Heart right ventricle (tissue), 16 donors: ENCODE measurements at regions of chr9 and their contacts with region 1.

Region 1: DNA sequence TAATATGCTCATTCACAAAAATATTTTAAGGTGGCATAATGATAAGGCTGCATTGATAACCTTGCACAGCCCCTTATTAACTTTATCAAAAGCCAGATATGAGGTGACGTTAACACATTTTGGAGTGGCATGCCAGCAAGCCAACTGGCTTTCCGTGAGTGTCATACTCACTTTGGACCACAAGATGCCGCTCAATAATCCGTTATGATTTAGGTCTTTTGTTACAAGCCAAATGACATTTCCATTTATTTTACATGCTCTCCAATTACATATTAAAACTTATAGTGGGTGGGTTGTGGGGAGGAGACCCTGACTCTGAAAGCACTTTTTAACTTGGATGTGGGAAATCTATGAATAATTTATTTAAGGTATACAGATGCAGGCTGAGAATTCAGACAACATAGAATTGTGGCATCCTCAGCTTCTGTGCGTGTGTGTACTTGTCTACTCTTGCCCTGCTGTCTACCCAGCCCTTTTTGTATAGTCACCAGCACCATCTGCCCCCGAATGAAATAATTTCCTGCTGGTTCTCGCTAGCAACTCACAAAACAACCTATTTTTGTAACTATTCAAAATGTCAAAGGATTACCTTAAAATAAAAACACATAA is 305.1 kb downstream of the PSAT1 start:
- DNase-seq: peak in 1 of 2 donors; percentile 5
- ATAC-seq: no peak
- H3K4me3 ChIP-seq: no peak overlapping the region
- H3K27ac ChIP-seq: no peak overlapping the region
- H3K4me1 ChIP-seq: no peaks in the 10 kb centered on the region
- H3K27me3 ChIP-seq: peaks cover 0 to 29% (median 0%) of the 10 kb centered on the region in 7 donors
- CTCF ChIP-seq: peak; percentile 20 to 75 (median 59)

Region 2: GRCh38 chr9:78439190-78439865 is 162.7 kb before region 1 on chr9:
- intact Hi-C with region 1: no loop called
- DNase-seq: peak; percentile 66 to 75
- ATAC-seq: peak; percentile 52 to 88 (median 80)
- H3K4me3 ChIP-seq: peak overlapping the region in 2 of 10 donors; percentile 18 to 25
- H3K27ac ChIP-seq: no peak overlapping the region
- H3K4me1 ChIP-seq: peaks cover 0 to 9% (median 3%) of the 10 kb centered on the region in 9 donors
- H3K27me3 ChIP-seq: peaks cover 0 to 41% (median 7%) of the 10 kb centered on the region in 7 donors
- CTCF ChIP-seq: peak; percentile 86 to 97 (median 91)

Region 3: DNA sequence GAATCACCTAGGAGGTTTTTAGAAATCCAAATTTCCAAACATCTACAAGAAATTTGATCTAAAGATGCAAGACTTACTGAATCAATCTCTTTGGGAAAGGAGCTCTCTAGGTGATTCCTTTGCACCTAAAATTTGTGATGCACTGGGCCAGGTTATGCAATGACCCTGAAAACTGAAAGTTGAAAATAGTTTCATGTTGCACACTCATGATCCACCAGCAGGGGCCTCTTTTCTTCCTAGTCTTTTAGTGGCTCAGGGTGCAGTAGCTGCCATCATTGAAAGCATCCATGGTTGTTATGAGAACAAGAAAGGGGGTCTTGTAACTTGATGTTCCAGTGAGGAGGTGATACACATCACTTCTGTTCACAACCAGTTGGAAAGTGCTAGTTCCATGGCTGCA is 181.7 kb after region 1 on chr9:
- intact Hi-C with region 1: loop called in 1 of 10 experiments (anchors 10 kb)
- DNase-seq: no peak
- ATAC-seq: no peak
- H3K4me3 ChIP-seq: no peak overlapping the region
- H3K27ac ChIP-seq: no peak overlapping the region
- H3K4me1 ChIP-seq: no peaks in the 10 kb centered on the region
- H3K27me3 ChIP-seq: no peaks in the 10 kb centered on the region
- CTCF ChIP-seq: no peak

Region 4: DNA sequence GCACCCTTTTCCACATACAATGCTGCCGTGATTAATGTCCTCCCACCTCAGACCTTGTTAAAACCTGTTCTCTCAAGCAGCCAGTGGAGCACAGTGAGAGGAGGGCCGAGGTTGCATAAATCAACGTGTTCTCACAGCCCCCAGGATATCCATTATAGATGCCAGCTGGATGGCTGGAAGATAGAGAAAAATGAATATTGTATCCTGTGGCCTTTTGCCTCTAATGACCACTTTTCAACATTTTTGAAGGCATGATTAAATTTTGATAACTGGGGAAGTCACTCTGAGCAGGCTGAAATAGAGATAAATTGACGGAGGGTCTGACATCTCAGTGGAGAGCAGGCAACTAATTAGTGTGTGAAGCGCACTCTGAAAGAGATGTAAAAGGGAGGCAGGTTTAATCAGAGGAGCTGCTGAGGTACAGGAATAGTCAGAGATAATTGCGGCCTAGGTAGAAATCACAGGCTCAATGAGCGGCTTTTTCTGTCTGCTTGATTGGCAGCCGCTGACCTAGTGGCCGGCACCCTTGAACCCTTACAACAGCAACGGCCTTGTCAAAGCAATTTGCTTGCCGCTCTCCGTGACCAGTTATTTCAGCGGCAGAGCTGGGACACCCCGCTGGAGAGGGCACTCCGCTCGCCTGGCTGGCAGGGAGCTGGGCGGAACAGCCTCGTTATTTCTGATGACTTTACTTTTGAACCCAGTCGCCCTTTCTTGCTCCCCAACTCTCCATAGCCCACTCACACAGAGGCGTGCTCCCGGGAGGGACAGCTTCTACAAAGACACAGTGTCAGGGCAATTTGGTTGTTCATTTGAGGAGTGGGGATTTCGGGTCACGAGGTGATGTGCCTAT is 255.5 kb after region 1 on chr9:
- intact Hi-C with region 1: loop called in 1 of 10 experiments (anchors 5 kb)
- DNase-seq: no peak
- ATAC-seq: no peak
- H3K4me3 ChIP-seq: no peak overlapping the region
- H3K27ac ChIP-seq: no peak overlapping the region
- H3K4me1 ChIP-seq: no peaks in the 10 kb centered on the region
- H3K27me3 ChIP-seq: no peaks in the 10 kb centered on the region
- CTCF ChIP-seq: no peak